Aorta (tissue), 5 donors: ENCODE measurements at regions of chr5 and their contacts with region 1.

Region 1: GRCh38 chr5:43556857-43557542 is at the start of gene PAIP1:
- DNase-seq: peak; percentile 89 to 95
- ATAC-seq: peak; percentile 96
- H3K4me3 ChIP-seq: peak within 1 kb of the TSS; percentile 73 to 100
- H3K27ac ChIP-seq: peak within 1 kb of the TSS; percentile 51 to 99
- H3K4me1 ChIP-seq: peaks cover 0 to 8% of the 10 kb centered on the region in 2 donors
- H3K27me3 ChIP-seq: no peaks in the 10 kb centered on the region
- total RNA-seq, gene PAIP1: 63.5 to 65.8 TPM

Region 2: GRCh38 chr5:43514816-43515677 is 42.0 kb before region 1 on chr5 and contains the start of gene C5orf34:
- intact Hi-C with region 1: loop called in 1 of 2 experiments (anchors 5 kb)
- DNase-seq: peak; percentile 97 to 99
- ATAC-seq: peak; percentile 100
- H3K4me3 ChIP-seq: peak within 1 kb of the TSS; percentile 63 to 92
- H3K27ac ChIP-seq: peak within 1 kb of the TSS; percentile 44 to 92
- H3K4me1 ChIP-seq: peaks cover 0 to 4% of the 10 kb centered on the region in 2 donors
- H3K27me3 ChIP-seq: no peaks in the 10 kb centered on the region
- total RNA-seq, gene C5orf34: 2.0 to 2.3 TPM

Region 3: DNA sequence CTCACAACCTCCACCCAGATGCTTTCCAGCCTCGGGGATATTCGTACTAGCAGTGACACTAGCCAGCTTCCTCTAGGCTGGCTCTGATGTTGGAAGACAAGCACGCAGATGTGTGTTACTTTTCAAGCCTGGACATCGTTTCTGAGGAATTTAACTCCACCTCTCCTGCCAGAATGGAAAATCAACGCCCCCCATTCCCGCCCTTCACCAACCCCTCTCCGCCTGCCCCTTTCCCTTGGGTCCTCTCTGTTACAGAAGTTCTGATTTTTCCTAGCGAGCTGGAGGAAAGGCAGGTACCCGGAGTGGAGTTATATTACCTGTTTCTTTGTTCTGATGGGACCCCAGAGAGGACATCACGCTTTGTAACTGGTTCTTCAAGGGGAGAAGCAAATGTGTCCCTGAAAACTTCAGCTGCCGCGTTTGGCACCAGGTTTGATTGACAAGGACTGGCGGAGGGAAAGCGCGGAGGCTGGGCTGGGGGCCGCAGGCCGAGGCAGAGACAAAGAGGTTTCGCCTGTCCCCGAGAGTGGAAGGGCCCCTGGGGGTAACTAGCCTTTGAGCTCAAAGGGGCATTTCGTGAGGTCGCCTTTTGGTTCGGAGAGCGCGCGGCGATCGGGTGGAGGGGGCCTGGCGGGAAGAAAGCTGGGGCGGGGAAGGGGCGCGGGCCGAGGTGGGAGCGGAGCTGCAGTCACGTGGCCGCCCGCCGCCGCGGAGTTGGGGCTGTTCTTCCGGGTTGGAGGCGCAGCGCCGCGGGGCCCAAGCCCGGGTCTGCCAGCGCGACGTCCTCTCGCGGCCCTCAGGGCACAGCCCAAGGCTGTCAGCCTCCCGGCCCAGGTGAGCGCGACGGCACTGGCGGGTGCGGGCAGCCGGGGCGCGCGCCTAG is 45.7 kb after region 1 on chr5 and contains the start of gene NNT:
- intact Hi-C with region 1: loop called (anchors 2 kb)
- DNase-seq: peak; percentile 87 to 94
- ATAC-seq: peak; percentile 94
- H3K4me3 ChIP-seq: peak within 1 kb of the TSS; percentile 51 to 66
- H3K27ac ChIP-seq: peak within 1 kb of the TSS; percentile 22 to 60
- H3K4me1 ChIP-seq: peaks cover 0 to 5% of the 10 kb centered on the region in 2 donors
- H3K27me3 ChIP-seq: no peaks in the 10 kb centered on the region
- total RNA-seq, gene NNT: 53.6 to 69.4 TPM